ENCODE measurements at regions of chr3 and their contacts with region 1.

Region 1: GRCh38 chr3:188320757-188321156 is 166.8 kb downstream of the LPP start:
- DNase-seq: no peak
- H3K4me3 Mint-ChIP-seq: no peak overlapping the region
- H3K27ac Mint-ChIP-seq: peak overlapping the region; percentile 29
- H3K4me1 Mint-ChIP-seq: peaks cover 48% of the 10 kb centered on the region
- H3K27me3 Mint-ChIP-seq: peaks cover 4% of the 10 kb centered on the region

Region 2: DNA sequence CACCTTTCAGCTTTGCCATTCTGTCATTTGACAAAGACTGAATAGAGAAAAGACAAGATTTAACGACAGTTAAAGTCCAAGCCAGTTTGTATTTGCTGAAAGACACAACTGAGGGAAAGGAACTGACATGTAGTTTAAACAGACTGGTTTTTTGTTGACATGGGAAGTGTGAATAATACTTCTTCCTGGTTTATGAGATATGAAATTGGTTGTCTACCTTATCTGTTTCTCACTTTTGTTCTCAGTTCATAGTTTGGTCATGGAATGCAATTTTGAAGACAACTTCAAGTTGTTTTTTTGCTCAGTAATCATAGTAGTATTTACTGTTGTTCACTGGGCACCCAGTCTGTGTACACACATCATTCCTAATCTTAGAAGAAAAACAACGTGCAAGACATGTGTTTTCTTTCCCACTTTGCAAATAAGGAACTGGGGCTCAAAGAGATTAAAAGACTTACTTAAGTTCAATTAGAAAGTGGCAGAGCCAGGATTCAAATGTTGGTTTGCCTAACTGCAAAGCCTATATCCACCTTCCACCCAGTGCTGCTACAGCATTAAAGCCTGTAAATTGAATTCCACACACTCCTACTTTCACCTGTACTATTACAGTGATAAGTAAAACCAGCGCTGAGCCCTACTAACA is 63.3 kb before region 1 on chr3:
- intact Hi-C with region 1: loop called (anchors 1 kb)
- DNase-seq: no peak
- H3K4me3 Mint-ChIP-seq: no peak overlapping the region
- H3K27ac Mint-ChIP-seq: peak overlapping the region; percentile 85
- H3K4me1 Mint-ChIP-seq: peaks cover 47% of the 10 kb centered on the region
- H3K27me3 Mint-ChIP-seq: no peaks in the 10 kb centered on the region

Region 3: GRCh38 chr3:188339410-188340295 is 18.9 kb after region 1 on chr3:
- intact Hi-C with region 1: loop called (anchors 1 kb)
- DNase-seq: peak; percentile 81
- H3K4me3 Mint-ChIP-seq: peak overlapping the region; percentile 66
- H3K27ac Mint-ChIP-seq: peak overlapping the region; percentile 93
- H3K4me1 Mint-ChIP-seq: peaks cover 34% of the 10 kb centered on the region
- H3K27me3 Mint-ChIP-seq: peaks cover 6% of the 10 kb centered on the region

Region 4: GRCh38 chr3:188389711-188390342 is 69.1 kb after region 1 on chr3:
- intact Hi-C with region 1: loop called (anchors 5 kb)
- DNase-seq: peak; percentile 84
- H3K4me3 Mint-ChIP-seq: peak overlapping the region; percentile 49
- H3K27ac Mint-ChIP-seq: peak overlapping the region; percentile 90
- H3K4me1 Mint-ChIP-seq: peaks cover 42% of the 10 kb centered on the region
- H3K27me3 Mint-ChIP-seq: no peaks in the 10 kb centered on the region

Region 5: GRCh38 chr3:188584162-188584529 is 263.4 kb after region 1 on chr3:
- intact Hi-C with region 1: loop called (anchors 5 kb)
- DNase-seq: no peak
- H3K4me3 Mint-ChIP-seq: no peak overlapping the region
- H3K27ac Mint-ChIP-seq: no peak overlapping the region
- H3K4me1 Mint-ChIP-seq: peaks cover 14% of the 10 kb centered on the region
- H3K27me3 Mint-ChIP-seq: no peaks in the 10 kb centered on the region

Measured in activated CD4-positive, alpha-beta T cell treated with anti-CD3 and anti-CD28 coated beads, Interleukin-2, amount 10 ng/mL, durations not matched to agents 24 days and 14 days (primary cell).